Ovary (tissue), 10 donors: ENCODE measurements at regions of chr7 and their contacts with region 1.

Region 1: DNA sequence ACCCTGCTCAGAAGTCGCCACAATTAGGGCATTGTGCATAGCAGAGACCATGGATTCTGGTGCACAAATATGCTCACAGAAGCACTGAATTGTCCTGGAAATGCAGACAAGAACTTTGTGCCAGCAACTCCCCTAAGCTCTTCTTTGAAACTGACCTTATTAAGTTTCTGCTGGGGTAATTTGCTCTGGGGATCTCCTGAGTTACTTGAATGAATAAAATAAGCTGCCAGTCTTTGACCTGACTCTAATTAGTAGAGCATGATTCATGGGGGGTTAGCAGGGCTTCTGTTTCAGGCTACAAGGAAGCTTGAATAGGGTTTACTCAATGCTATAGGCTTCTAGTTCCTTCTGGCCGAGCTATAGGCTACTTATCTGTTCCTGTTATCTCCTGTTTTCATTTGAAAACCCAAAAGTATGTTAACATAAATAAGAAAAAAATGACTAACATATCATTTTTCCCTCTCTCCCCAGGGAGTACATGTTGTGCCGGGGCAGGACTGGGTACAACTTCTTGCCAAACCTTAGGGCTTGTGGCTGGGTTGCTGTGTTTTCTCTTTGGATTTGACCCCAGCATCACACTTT is 169.0 kb upstream of the TMEM229A start:
- DNase-seq: no peak
- H3K4me3 ChIP-seq: no peak overlapping the region
- H3K27ac ChIP-seq: no peak overlapping the region
- H3K4me1 ChIP-seq: no peaks in the 10 kb centered on the region
- H3K27me3 ChIP-seq: peaks cover 4% of the 10 kb centered on the region
- CTCF ChIP-seq: no peak
- EP300 ChIP-seq: no peak
- POLR2A ChIP-seq: no peak

Region 2: DNA sequence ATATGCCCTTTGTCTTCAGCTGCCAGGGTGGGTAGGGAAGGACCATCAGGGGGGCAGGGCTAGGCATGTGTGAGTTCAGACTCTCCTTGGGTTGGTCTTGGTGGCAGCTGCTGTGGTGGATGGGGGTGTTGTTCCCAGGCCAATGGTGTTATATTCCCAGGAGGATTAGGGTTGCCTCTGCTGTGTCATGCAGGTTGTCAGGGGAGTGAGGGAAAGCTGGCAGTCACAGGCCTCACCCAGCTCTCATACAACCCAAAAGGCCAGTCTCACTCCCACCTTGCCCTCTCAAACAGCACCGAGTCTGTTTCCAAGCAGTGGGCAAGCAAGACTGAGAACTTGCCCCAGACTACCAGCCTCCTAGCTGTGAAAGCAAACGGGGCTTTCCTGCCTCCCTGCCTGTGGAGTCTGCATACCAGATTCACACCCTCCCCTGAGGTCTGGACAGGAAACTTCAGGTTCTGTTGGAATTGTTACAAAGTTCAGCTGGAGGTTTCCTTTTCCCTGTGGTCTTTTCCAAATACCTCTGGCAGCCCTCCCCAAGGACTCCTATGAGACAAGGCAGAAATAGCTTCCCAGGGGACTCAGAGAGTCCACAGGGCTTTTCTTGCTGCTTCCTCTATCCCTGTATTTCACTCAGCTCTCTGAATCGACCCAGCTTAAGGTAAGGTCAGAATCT is 355.5 kb before region 1 on chr7:
- intact Hi-C with region 1: no loop called
- DNase-seq: no peak
- H3K4me3 ChIP-seq: no peak overlapping the region
- H3K27ac ChIP-seq: no peak overlapping the region
- H3K4me1 ChIP-seq: no peaks in the 10 kb centered on the region
- H3K27me3 ChIP-seq: no peaks in the 10 kb centered on the region
- CTCF ChIP-seq: no peak
- EP300 ChIP-seq: no peak
- POLR2A ChIP-seq: no peak

Region 3: GRCh38 chr7:124171068-124171467 is 30.8 kb before region 1 on chr7:
- intact Hi-C with region 1: loop called in 1 of 4 experiments (anchors 2 kb)
- DNase-seq: no peak
- H3K4me3 ChIP-seq: no peak overlapping the region
- H3K27ac ChIP-seq: no peak overlapping the region
- H3K4me1 ChIP-seq: no peaks in the 10 kb centered on the region
- H3K27me3 ChIP-seq: no peaks in the 10 kb centered on the region
- CTCF ChIP-seq: no peak
- EP300 ChIP-seq: no peak
- POLR2A ChIP-seq: no peak

Region 4: GRCh38 chr7:124566576-124566975 is 364.7 kb after region 1 on chr7:
- intact Hi-C with region 1: no loop called
- DNase-seq: no peak
- H3K4me3 ChIP-seq: no peak overlapping the region
- H3K27ac ChIP-seq: no peak overlapping the region
- H3K4me1 ChIP-seq: no peaks in the 10 kb centered on the region
- H3K27me3 ChIP-seq: no peaks in the 10 kb centered on the region
- CTCF ChIP-seq: no peak
- EP300 ChIP-seq: no peak
- POLR2A ChIP-seq: no peak